ENCODE measurements at regions of chr1 and their contacts with region 1.

Region 1: DNA sequence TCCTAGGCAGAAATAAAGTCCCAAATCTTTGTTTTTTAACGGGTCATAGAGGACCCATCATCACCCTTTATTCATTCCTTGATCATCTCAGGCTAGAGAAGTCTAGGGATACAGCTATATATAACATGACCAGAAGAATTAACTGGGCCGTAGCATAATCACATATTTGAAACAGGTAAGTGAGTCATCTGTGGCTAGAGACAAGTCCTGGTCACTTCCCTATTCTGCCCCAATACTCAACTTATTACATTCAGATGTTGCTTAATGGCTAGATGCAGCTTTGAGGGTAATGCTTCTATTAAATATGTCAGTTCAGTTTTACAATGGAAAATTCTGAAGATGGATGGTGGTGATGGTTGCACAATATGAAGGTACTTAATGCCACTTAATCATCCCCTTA is 47.0 kb downstream of the EXO1 start:
- DNase-seq: no peak
- ATAC-seq: no peak
- H3K4me3 ChIP-seq: no peak overlapping the region
- H3K27ac ChIP-seq: no peak overlapping the region
- H3K4me1 ChIP-seq: no peaks in the 10 kb centered on the region
- H3K27me3 ChIP-seq: no peaks in the 10 kb centered on the region
- CTCF ChIP-seq: no peak
- EP300 ChIP-seq: no peak
- POLR2A ChIP-seq: no peak
- RAD21 ChIP-seq: no peak

Region 2: DNA sequence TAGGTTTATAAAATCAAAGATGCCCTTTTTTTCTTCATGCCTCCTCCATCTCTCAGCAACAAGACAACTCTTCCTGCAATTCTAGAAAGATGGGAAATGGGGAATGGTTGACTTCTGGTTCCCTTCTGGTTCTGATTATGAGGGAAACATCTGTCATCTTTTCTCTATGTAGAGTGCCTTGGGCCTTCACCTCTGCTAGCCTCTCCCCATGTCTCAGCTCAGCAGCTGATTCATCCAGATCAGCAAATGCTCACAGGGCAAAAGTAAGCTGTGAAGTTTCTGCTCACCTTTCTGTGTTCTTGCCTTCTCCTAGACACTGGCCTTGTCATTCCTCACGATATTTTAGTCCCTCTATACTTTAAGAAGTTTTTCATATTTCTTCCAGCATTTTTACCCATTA is 44.8 kb after region 1 on chr1:
- CTCF ChIA-PET with region 1: no interaction called
- POLR2A ChIA-PET with region 1: no interaction called
- in situ Hi-C with region 1: no loop called
- intact Hi-C with region 1: no loop called
- DNase-seq: no peak
- ATAC-seq: no peak
- H3K4me3 ChIP-seq: no peak overlapping the region
- H3K27ac ChIP-seq: no peak overlapping the region
- H3K4me1 ChIP-seq: peaks cover 0 to 2% of the 10 kb centered on the region in 2 experiments; a peak in 2 of 5 replicates
- H3K27me3 ChIP-seq: peaks cover 4% of the 10 kb centered on the region in 2 experiments
- CTCF ChIP-seq: no peak
- EP300 ChIP-seq: no peak
- POLR2A ChIP-seq: no peak
- RAD21 ChIP-seq: no peak

Region 3: DNA sequence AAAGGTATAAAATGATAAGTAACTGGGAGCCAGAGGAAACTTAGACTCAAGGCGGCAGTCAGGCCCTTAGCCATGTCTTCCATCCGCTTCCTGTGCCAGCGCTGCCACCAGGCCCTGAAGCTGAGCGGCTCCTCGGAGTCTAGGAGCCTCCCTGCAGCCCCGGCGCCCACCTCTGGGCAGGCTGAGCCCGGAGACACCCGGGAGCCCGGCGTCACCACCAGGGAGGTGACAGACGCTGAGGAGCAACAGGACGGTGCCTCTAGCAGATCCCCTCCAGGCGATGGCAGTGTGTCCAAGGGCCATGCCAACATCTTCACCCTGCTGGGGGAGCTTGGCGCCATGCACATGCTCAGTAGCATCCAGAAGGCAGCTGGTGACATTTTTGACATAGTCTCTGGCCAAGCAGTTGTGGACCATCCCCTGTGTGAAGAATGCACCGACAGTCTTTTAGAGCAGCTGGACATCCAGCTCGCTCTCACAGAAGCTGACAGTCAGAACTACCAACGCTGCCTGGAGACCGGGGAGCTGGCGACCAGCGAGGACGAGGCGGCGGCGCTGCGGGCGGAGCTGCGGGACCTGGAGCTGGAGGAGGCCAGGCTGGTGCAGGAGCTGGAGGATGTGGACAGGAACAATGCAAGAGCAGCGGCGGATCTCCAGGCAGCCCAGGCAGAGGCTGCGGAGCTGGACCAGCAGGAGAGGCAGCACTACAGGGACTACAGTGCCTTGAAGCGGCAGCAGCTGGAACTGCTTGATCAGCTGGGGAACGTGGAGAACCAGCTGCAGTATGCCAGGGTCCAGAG is 62.9 kb after region 1 on chr1 and contains the start of gene BECN2:
- CTCF ChIA-PET with region 1: interaction called, 12 read pairs
- POLR2A ChIA-PET with region 1: no interaction called
- in situ Hi-C with region 1: no loop called
- intact Hi-C with region 1: loop called (anchors 1 kb)
- DNase-seq: peak in 3 of 4 experiments; percentile 16 to 58 (median 57)
- ATAC-seq: peak; percentile 96
- H3K4me3 ChIP-seq: no peak within 1 kb of the TSS
- H3K27ac ChIP-seq: no peak within 1 kb of the TSS
- H3K4me1 ChIP-seq: peaks cover 3 to 9% of the 10 kb centered on the region in 2 experiments; a peak in 2 of 5 replicates
- H3K27me3 ChIP-seq: peaks cover 29 to 48% of the 10 kb centered on the region in 2 experiments
- CTCF ChIP-seq: peak; percentile 61 to 78 (median 73)
- EP300 ChIP-seq: no peak
- POLR2A ChIP-seq: no peak
- RAD21 ChIP-seq: peak; percentile 41 to 82; a peak in 3 of 4 replicates
- polyA plus RNA-seq, gene BECN2: not detected

Region 4: DNA sequence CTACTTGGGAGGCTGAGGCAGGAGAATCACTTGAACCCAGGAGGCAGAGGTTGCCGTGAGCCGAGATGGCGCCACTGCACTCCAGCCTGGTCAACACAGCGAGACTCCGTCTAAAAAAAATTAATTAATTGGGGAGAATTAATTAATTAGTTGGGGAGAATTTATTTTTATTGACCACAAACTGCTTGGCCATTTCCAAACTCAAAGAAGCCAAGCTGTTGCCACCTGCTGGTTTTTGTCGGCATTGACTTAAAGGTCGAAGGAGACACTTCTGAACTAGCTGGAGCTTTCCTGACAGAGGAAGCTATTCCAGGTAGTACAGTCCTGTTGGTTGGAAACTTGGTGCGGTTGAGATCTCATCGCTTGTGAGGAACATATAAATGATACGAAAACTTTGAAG is 90.8 kb after region 1 on chr1:
- CTCF ChIA-PET with region 1: interaction called, 22 read pairs
- POLR2A ChIA-PET with region 1: no interaction called
- in situ Hi-C with region 1: loop called (anchors 5 kb)
- intact Hi-C with region 1: loop called (anchors 1 kb)
- DNase-seq: peak; percentile 42 to 70 (median 50)
- ATAC-seq: peak; percentile 82
- H3K4me3 ChIP-seq: no peak overlapping the region
- H3K27ac ChIP-seq: no peak overlapping the region
- H3K4me1 ChIP-seq: no peaks in the 10 kb centered on the region; a peak in 1 of 5 replicates
- H3K27me3 ChIP-seq: peaks cover 20 to 25% of the 10 kb centered on the region in 2 experiments
- CTCF ChIP-seq: peak; percentile 58 to 75 (median 65)
- EP300 ChIP-seq: no peak
- POLR2A ChIP-seq: no peak
- RAD21 ChIP-seq: peak; percentile 48 to 72; a peak in 3 of 4 replicates

Region 5: DNA sequence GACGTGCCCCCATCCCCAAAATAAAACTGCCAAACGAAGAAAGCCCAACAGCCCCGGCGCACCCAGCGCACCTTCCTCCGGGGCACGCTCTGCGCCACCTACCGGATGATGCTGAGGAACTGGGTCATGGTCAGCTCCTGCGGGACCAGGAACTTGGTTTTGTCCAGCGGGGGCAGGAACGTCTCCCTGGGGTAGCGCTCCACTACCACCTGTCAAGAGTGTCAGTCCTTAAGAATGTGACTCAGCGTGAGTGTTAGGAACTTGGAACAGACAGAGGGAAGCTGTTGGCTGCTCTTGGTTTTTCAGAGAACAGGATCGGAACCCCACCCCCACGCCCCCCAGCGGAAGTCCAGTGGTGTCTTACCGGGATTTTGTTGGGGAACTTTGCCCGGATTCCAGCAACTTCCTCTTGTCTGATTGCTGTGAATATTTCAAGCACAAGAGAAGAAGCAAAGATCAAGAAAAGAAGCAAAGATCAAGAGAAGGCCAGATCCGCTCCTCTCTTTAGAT is 103.5 kb after region 1 on chr1:
- CTCF ChIA-PET with region 1: interaction called, 16 read pairs
- POLR2A ChIA-PET with region 1: no interaction called
- in situ Hi-C with region 1: no loop called
- intact Hi-C with region 1: loop called (anchors 1 kb)
- DNase-seq: peak; percentile 81 to 85 (median 83)
- ATAC-seq: peak; percentile 97
- H3K4me3 ChIP-seq: peak overlapping the region; percentile 48
- H3K27ac ChIP-seq: no peak overlapping the region; the same call in 2 of the 3 replicates
- H3K4me1 ChIP-seq: peaks cover 0 to 4% of the 10 kb centered on the region in 2 experiments; a peak in 1 of 5 replicates
- H3K27me3 ChIP-seq: peaks cover 27 to 50% of the 10 kb centered on the region in 2 experiments
- CTCF ChIP-seq: peak; percentile 83 to 100 (median 95)
- EP300 ChIP-seq: no peak
- POLR2A ChIP-seq: no peak
- RAD21 ChIP-seq: peak; percentile 60 to 66

Region 6: GRCh38 chr1:242128951-242129502 is 234.0 kb after region 1 on chr1:
- CTCF ChIA-PET with region 1: no interaction called
- POLR2A ChIA-PET with region 1: no interaction called
- in situ Hi-C with region 1: no loop called
- intact Hi-C with region 1: loop called (anchors 5 kb)
- DNase-seq: peak in 2 of 4 experiments; percentile 14 to 32
- ATAC-seq: peak; percentile 92
- H3K4me3 ChIP-seq: no peak overlapping the region
- H3K27ac ChIP-seq: no peak overlapping the region
- H3K4me1 ChIP-seq: no peaks in the 10 kb centered on the region
- H3K27me3 ChIP-seq: no peaks in the 10 kb centered on the region
- CTCF ChIP-seq: peak; percentile 25 to 48 (median 36); a peak in 4 of 6 replicates
- EP300 ChIP-seq: no peak
- POLR2A ChIP-seq: no peak
- RAD21 ChIP-seq: peak in 1 of 2 experiments; percentile 50; a peak in 2 of 4 replicates

Region 7: DNA sequence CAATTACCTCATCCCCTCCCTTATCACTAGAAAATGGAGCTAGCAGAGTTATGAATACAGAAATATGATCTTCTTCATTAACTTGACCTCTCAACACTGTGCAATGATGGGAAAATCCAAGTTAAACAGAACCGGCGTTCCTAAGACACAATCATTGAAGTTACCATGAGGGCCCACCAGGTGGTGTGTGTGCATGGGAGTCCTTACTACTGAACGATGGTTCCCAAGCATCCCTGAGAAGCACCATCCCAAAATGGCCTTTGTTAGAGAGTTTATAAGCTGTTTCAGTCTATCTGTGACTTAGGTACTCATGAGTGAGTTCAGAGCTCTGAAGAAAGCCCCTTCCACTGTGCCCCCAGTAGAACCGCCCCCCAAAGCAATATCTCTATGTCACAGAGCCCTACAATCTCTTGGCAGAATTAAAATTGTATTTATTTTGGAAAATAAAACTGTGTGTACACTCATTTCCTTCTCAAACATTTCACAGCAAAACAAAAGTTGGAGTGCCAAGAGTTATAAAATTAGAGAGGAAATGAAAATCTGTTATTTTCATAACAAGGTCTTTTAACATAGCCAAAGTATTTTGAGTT is 572.6 kb after region 1 on chr1:
- CTCF ChIA-PET with region 1: no interaction called
- POLR2A ChIA-PET with region 1: no interaction called
- in situ Hi-C with region 1: loop called (anchors 25 kb)
- intact Hi-C with region 1: no loop called
- DNase-seq: peak; percentile 42 to 54 (median 50)
- ATAC-seq: peak; percentile 88
- H3K4me3 ChIP-seq: no peak overlapping the region
- H3K27ac ChIP-seq: no peak overlapping the region
- H3K4me1 ChIP-seq: no peaks in the 10 kb centered on the region
- H3K27me3 ChIP-seq: no peaks in the 10 kb centered on the region
- CTCF ChIP-seq: peak; percentile 50 to 59 (median 58)
- EP300 ChIP-seq: no peak
- POLR2A ChIP-seq: no peak
- RAD21 ChIP-seq: peak; percentile 34 to 67